ENCODE measurements at regions of chr19 and their contacts with region 1.

Region 1: GRCh38 chr19:51688672-51689571 is 4.2 kb upstream of the SPACA6 start:
- DNase-seq: peak; percentile 75
- H3K27ac ChIP-seq: peak overlapping the region; percentile 99
- CTCF ChIP-seq: no peak

Region 2: DNA sequence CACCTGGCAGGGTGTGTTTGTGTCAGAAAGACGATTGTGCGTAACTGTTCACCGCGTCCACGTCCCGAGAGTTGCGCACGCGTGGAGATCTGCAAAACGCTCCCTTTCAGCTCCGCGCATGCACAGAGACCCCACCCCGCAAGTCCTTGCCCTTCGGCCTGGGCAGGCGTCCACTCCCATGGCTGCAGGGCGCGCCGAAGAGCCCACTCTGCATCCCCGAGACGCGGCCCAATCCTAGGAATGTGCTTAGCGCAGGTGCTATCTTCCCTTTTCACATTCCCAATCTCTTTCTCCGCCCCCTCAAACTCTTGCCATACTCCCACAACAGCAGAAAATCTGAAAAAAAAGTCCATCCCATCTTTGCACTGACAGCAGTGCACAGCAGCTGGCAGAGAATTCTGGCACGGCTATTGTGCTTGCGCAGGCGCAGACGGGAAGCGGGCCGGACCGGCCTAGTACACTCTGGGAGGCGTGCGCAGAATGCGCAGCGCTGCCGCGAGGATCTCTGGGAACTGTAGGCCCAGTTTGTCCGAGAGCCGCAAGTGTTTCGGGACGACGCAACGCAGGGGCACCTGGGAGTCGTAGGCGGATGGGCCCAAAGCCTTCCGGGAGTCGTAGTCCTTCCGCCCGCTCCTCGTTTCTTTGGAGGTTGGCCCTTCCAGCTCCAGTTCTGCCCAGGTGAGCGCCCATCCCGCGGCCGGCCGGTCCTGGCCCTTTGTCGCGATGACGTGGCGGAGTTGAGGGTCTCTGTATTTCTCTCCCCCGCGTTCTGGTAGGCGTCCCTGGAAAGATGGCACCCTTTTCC is 94.8 kb before region 1 on chr19:
- CTCF ChIA-PET with region 1: no interaction called
- POLR2A ChIA-PET with region 1: no interaction called
- DNase-seq: peak; percentile 96
- H3K27ac ChIP-seq: peak overlapping the region; percentile 70
- CTCF ChIP-seq: no peak

Region 3: GRCh38 chr19:51703575-51704515 is 14.9 kb after region 1 on chr19:
- CTCF ChIA-PET with region 1: interaction called, 3 read pairs
- POLR2A ChIA-PET with region 1: interaction called, 17 read pairs
- DNase-seq: peak; percentile 94
- H3K27ac ChIP-seq: peak overlapping the region; percentile 90
- CTCF ChIP-seq: no peak; the same call in 1 of the 2 replicates